Mammary epithelial cell (primary cell): ENCODE measurements at regions of chr5 and their contacts with region 1.

Region 1: DNA sequence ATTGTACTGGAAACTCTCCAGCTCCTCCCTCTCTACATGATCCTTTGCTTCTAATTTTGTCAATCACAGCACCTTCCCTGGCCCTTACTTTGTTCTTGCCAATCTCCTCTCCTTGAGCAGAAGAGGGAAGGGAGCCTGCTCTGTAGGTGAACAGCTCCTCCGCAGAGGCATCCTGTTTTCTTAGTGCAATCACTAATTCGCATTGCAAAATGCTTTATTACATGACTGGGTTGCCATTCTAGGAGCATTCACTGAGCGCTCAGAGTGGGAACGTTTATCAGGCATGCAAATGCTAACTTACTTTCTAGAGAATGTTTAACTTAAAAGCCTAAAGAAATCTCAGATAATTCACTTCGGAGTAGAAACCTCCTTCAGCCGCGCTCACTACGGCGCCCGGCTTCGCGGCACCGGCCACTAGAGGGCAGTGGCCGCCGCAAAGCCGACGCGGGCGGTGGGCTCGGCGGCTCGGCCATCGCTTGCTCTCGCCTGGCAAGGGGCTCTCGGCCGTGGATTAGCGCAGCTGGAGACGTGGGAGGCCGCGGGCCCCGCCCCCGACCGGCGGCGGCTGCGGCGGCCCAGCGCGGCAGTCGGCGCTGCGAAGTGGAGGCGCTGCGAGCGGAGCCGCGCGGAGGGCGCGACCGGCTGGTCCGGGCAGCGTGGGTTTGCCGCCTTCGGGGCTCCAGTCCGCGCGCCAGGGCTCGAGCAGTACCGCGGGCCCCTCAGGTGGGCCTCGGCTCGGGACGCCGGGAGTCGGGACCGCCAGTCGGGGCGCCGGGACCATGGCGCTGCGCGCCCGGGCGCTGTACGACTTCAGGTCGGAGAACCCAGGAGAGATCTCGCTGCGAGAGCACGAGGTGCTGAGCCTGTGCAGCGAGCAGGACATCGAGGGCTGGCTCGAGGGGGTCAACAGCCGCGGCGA is at the start of gene SNX18:
- DNase-seq: peak; percentile 83
- H3K4me3 ChIP-seq: peak within 1 kb of the TSS; percentile 76 to 84 (median 81)
- H3K27ac ChIP-seq: peak within 1 kb of the TSS; percentile 54
- H3K4me1 ChIP-seq: peaks cover 37% of the 10 kb centered on the region
- H3K27me3 ChIP-seq: no peaks in the 10 kb centered on the region
- CTCF ChIP-seq: peak; percentile 70 to 96
- total RNA-seq, gene SNX18: 22.6 to 84.0 TPM

Region 2: DNA sequence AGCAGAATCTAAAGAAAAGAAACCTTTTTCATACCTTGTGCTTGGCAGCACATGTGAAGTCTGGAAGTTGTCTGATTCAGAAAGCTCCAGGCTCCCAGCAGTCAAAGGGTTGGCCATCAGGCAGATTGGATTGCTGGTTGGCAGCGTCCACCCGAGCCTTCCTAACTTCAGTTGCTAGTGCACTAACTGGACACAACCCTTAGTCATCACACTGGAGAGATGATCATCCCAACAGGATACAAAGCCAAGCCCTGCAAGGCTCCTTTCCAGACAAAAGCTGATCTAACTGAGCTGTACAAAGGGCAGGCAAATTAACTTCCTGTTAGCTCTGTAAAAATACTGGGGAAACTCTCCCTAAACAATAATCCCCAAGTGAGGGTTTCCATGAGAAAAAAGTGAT is 185.7 kb after region 1 on chr5:
- CTCF ChIA-PET with region 1: no interaction called
- dilution Hi-C with region 1: no loop called
- in situ Hi-C with region 1: no loop called
- intact Hi-C with region 1: loop called (anchors 5 kb)
- DNase-seq: peak; percentile 44
- H3K4me3 ChIP-seq: no peak overlapping the region
- H3K27ac ChIP-seq: no peak overlapping the region
- H3K4me1 ChIP-seq: peaks cover 28% of the 10 kb centered on the region
- H3K27me3 ChIP-seq: no peaks in the 10 kb centered on the region
- CTCF ChIP-seq: no peak

Region 3: DNA sequence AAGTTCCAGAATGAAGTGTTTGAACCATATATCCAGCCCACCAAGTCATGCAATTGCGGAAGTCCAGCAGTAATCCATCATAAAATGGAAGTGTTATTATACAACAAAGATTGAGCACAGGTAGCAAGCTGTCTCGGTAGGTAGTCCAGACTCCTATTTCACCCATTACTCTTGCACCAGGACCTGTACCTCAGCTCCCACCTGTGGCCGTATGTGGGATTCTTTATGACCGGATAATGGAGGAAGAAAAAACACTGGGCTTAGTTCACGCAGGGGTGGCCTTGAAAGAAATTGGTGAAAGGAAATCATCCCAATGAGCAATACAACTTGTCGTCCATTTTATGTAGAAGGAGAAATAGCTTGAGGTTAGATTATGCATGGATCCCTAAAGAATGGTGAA is 251.6 kb after region 1 on chr5:
- CTCF ChIA-PET with region 1: interaction called, 3 read pairs
- dilution Hi-C with region 1: no loop called
- in situ Hi-C with region 1: no loop called
- intact Hi-C with region 1: loop called (anchors 1 kb)
- DNase-seq: no peak
- H3K4me3 ChIP-seq: no peak overlapping the region
- H3K27ac ChIP-seq: no peak overlapping the region
- H3K4me1 ChIP-seq: peaks cover 3% of the 10 kb centered on the region
- H3K27me3 ChIP-seq: no peaks in the 10 kb centered on the region
- CTCF ChIP-seq: peak in 1 of 2 donors; percentile 10

Region 4: DNA sequence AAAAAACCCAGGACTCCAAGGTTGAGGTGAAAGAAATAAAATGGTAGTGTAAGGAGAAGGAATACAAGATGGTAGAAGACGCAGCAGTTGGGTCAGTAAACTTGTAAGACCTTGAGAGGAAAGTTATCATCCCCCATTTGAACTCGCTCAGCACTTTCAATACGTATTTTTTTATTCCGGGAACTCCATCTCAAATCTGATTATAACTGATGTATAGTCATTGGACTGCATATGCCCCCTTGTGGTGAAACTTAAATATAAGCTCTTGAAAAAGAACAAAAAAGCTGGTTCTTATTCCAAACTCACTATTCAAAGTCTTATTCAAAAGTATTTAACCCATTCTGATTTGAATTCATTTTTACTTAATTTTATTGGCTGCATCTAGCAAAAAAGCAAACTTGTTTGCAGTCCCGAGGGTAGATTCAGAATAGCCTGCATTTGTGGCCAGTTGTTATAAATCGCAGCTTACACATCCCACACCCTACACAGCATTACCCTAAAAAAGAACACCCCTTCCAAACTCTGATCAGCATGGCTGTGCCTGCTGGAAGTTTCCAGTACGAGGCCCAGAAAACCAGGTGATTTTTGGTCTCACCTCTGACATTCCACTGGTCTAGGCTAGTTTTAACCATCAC is 350.0 kb after region 1 on chr5:
- CTCF ChIA-PET with region 1: interaction called, 22 read pairs
- dilution Hi-C with region 1: no loop called
- in situ Hi-C with region 1: no loop called
- intact Hi-C with region 1: loop called (anchors 1 kb)
- DNase-seq: peak; percentile 16
- H3K4me3 ChIP-seq: no peak overlapping the region
- H3K27ac ChIP-seq: no peak overlapping the region
- H3K4me1 ChIP-seq: no peaks in the 10 kb centered on the region
- H3K27me3 ChIP-seq: peaks cover 3% of the 10 kb centered on the region
- CTCF ChIP-seq: peak; percentile 50 to 60

Region 5: DNA sequence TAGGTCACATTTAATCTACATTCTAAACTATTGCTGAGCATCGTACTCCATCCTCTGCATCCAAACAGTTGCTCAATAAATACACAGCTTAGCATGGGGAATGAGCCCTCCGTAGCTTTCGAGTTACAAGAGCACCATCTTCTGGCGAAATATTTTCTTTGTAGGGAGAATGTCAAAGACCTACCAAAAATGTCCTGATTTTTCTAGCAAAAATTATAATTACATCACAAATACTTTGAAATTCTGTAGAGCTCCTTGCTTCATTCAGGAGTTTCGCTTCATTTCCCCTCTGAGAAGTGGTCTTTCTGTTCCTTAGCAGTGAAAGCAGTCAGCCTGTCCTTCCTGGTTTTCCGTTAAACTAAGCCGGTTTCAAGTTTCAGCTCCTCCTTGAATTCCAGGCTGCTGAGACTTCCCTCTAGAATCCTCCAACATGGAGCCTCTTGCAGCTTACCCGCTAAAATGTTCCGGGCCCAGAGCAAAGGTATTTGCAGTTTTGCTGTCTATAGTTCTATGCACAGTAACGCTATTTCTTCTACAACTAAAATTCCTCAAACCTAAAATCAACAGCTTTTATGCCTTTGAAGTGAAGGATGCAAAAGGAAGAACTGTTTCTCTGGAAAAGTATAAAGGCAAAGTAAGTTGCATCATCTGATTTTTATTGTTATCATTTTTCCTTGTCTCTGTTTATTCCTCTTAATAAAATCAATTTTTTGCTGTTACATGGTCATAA is 642.5 kb after region 1 on chr5 and contains the start of gene GPX8:
- CTCF ChIA-PET with region 1: no interaction called
- dilution Hi-C with region 1: no loop called
- in situ Hi-C with region 1: no loop called
- intact Hi-C with region 1: loop called (anchors 2 kb)
- DNase-seq: peak; percentile 78
- H3K4me3 ChIP-seq: peak within 1 kb of the TSS; percentile 56 to 93 (median 92)
- H3K27ac ChIP-seq: peak within 1 kb of the TSS; percentile 90
- H3K4me1 ChIP-seq: peaks cover 8% of the 10 kb centered on the region
- H3K27me3 ChIP-seq: no peaks in the 10 kb centered on the region
- CTCF ChIP-seq: peak; percentile 49 to 63
- total RNA-seq, gene GPX8: 38.0 to 38.8 TPM